Posterior cingulate gyrus (tissue), 11 donors: ENCODE measurements at regions of chr17 and their contacts with region 1.

Region 1: DNA sequence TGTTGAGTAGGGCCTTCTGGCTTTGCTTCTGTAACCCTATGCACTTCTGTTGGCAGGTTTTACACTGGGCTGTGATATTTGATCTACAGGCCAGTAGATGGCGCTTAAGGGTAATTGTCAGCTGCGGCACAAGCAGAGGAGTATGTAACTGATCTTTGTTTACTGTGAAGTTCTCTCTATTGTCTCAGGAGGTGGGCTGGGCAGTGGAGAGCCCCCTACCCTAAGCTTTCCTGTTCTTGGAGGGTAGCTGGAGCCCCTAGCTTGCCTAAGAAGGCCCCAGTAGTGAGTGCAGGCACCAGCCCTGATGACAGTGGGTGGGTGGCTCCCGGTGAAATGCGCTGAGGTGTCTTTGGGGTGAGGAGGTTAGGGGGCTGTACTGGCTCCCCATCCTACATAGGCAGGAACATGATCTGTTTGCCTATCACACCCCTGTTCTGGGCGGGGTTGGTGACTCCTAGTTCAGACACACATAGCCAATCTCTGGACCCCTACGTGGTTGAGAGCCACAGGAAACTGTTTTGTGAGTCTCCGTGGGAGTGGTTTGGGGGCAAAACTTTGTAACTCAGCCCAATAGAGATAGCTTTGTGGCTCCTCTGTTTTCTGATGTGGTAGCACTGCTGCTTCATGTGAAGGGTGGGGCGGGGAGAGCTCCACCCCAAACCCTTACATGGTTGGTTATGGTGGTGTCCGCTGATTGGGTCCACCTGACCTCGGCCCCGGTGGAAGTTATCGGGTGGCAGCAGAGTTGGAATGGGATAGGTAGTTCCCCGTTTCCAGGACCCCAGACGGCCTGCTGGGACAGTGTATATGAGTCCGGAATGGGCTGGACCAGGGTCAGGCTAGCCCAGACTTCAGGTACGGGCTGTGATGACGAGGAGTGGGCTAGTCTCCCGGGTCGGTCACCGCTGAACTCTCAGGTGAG is 60.4 kb downstream of the SLFN11 start:
- DNase-seq: peak in 2 of 10 donors; percentile 19 to 76

Region 2: GRCh38 chr17:35254107-35254802 is 58.8 kb before region 1 on chr17:
- intact Hi-C with region 1: no loop called
- DNase-seq: peak in 1 of 10 donors; percentile 10

Region 3: GRCh38 chr17:35537601-35538141 is 224.6 kb after region 1 on chr17 and contains the start of gene SLFN12L:
- intact Hi-C with region 1: loop called (anchors 1 kb)
- DNase-seq: no peak

Region 4: GRCh38 chr17:35747540-35748017 is 434.5 kb after region 1 on chr17:
- intact Hi-C with region 1: loop called (anchors 5 kb)
- DNase-seq: peak; percentile 60 to 96 (median 80)